ENCODE measurements at regions of chr3 and their contacts with region 1.

Region 1: GRCh38 chr3:133812872-133813271 is 7.3 kb downstream of the SRPRB start:
- DNase-seq: no peak
- ATAC-seq: peak in 1 of 2 donors; percentile 11
- H3K4me3 ChIP-seq: no peak overlapping the region
- H3K27ac ChIP-seq: no peak overlapping the region
- H3K4me1 ChIP-seq: no peaks in the 10 kb centered on the region
- H3K27me3 ChIP-seq: no peaks in the 10 kb centered on the region

Region 2: GRCh38 chr3:133661454-133662277 is 151.2 kb before region 1 on chr3 and contains the start of gene TOPBP1:
- intact Hi-C with region 1: loop called in 1 of 4 experiments (anchors 10 kb)
- DNase-seq: peak; percentile 83 to 93 (median 92)
- ATAC-seq: peak; percentile 91 to 92
- H3K4me3 ChIP-seq: peak within 1 kb of the TSS; percentile 66
- H3K27ac ChIP-seq: peak within 1 kb of the TSS; percentile 93
- H3K4me1 ChIP-seq: peaks cover 3% of the 10 kb centered on the region
- H3K27me3 ChIP-seq: no peaks in the 10 kb centered on the region
- total RNA-seq, gene TOPBP1: 10.5 to 12.7 (median 12.4) TPM

Region 3: GRCh38 chr3:133701435-133702358 is 111.2 kb before region 1 on chr3:
- intact Hi-C with region 1: no loop called
- DNase-seq: no peak
- ATAC-seq: no peak
- H3K4me3 ChIP-seq: no peak overlapping the region
- H3K27ac ChIP-seq: no peak overlapping the region
- H3K4me1 ChIP-seq: no peaks in the 10 kb centered on the region
- H3K27me3 ChIP-seq: no peaks in the 10 kb centered on the region

Region 4: DNA sequence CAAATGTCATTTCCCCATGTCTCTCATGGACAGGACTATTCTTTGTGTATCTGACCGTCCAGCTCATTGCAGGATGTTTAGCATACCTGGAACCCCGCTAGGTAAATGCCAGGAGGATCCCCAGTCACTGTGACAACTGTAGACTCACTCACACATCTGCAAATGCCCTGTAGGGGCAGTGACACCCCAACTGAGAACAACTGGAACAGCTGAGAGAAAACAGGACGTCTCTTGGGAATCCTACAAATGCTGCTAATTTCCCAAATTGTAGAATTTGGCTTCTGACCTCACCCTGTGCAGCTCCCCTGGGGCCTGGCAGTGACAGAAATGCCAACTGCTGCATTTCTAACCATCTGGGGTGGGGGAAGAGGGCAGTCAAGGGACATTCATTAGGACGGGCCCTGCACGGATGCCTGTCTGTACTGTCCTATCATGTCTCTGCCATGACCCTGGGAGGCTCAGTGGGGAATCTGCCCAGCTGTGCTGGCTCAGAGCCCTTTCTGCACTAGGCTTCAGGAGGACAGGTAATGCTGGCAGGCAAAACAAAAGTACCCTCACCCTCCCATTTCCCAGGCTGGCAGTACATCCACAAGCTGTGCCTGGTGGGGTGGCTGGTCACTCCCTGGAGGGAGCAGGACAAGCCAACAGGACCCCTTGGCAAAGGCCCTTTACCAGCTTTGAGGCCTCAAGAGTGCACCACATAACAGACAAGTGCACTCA is 52.4 kb after region 1 on chr3:
- intact Hi-C with region 1: no loop called
- DNase-seq: peak in 1 of 3 donors; percentile 42
- ATAC-seq: no peak
- H3K4me3 ChIP-seq: no peak overlapping the region
- H3K27ac ChIP-seq: no peak overlapping the region
- H3K4me1 ChIP-seq: peaks cover 10% of the 10 kb centered on the region
- H3K27me3 ChIP-seq: no peaks in the 10 kb centered on the region

Region 5: DNA sequence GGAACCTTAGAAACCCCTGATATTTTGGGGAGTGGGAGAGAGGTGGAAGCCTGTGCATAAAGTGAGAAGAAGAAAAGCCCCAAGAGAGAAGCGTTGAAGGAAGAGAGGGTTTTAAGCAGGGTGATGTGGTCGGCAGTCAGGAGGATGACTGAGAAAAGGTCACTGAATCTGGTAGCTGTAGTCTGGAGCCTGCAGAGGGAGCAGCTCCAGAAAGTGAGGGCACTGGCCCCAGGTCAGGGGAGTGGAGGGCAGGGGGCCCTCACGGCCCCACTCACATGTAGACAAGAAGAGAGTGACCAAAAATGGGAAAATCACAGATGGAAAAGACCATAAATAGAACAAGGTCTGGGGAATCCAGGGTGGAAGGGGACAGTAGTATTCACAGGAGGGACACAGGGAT is 332.3 kb after region 1 on chr3:
- intact Hi-C with region 1: no loop called
- DNase-seq: no peak
- ATAC-seq: peak in 1 of 2 donors; percentile 13
- H3K4me3 ChIP-seq: no peak overlapping the region
- H3K27ac ChIP-seq: no peak overlapping the region
- H3K4me1 ChIP-seq: peaks cover 5% of the 10 kb centered on the region
- H3K27me3 ChIP-seq: no peaks in the 10 kb centered on the region

Measured in right cardiac atrium (tissue), 5 donors.